ENCODE measurements at regions of chr12 and their contacts with region 1.

Region 1: GRCh38 chr12:110639336-110640141 is 25.6 kb downstream of the TCTN1 start:
- DNase-seq: no peak
- H3K4me3 ChIP-seq: no peak overlapping the region
- H3K27ac ChIP-seq: peak overlapping the region; percentile 23 to 55
- H3K4me1 ChIP-seq: peaks cover 0 to 4% of the 10 kb centered on the region in 2 donors
- H3K27me3 ChIP-seq: no peaks in the 10 kb centered on the region
- CTCF ChIP-seq: no peak
- POLR2A ChIP-seq: no peak

Region 2: GRCh38 chr12:110563702-110564640 is 75.6 kb before region 1 on chr12:
- intact Hi-C with region 1: no loop called
- DNase-seq: no peak
- H3K4me3 ChIP-seq: no peak overlapping the region
- H3K27ac ChIP-seq: peak overlapping the region; percentile 74 to 78
- H3K4me1 ChIP-seq: peaks cover 5 to 10% of the 10 kb centered on the region in 2 donors
- H3K27me3 ChIP-seq: no peaks in the 10 kb centered on the region
- CTCF ChIP-seq: no peak
- POLR2A ChIP-seq: no peak

Region 3: DNA sequence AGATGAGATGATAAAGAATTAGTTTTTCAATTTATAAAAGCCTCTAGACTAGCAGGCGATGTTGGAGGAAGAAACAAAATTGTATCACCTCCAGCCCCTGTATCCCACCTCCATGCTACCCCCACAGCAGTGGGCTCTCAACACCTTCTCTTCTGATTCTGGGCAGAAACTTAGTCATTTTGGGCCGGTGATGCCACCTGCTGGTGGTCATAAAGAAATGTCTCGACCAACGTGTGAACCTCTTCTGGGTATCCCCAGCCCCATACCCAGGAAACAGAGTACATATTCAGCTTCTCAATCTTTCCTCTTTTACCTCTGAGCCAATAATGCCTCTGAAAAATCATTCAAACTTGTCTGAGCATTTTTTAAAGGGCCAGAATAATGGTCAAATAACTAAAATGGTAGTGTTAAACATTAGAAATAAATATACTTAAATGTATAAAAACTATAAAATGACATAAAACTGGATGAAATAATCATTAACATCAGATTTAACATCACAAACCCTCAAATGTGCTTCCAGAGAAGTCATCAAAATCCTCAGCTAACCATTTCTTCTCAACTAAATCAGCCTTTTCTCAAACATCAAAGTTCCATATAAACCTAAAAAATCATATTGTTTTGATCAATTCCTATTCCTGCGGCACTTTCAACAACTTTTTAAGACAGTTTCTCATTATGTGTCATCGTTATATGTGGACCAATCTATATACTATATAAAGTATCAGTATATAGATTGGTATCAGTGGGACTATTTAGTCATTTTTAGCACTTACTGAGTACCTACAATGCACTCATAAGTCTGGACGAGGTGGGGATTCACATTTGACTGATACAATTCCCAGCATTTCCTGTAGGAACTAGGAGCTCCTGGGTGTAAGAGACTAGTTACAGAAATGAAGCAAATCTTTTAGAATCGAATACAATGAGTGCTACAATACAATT is 890.2 kb after region 1 on chr12:
- intact Hi-C with region 1: loop called (anchors 10 kb)
- DNase-seq: peak; percentile 30 to 43
- H3K4me3 ChIP-seq: no peak overlapping the region
- H3K27ac ChIP-seq: no peak overlapping the region
- H3K4me1 ChIP-seq: no peaks in the 10 kb centered on the region
- H3K27me3 ChIP-seq: no peaks in the 10 kb centered on the region
- CTCF ChIP-seq: peak in 3 of 4 experiments; percentile 38 to 64 (median 56)
- POLR2A ChIP-seq: no peak